Mammary epithelial cell (primary cell): ENCODE measurements at regions of chr14 and their contacts with region 1.

Region 1: DNA sequence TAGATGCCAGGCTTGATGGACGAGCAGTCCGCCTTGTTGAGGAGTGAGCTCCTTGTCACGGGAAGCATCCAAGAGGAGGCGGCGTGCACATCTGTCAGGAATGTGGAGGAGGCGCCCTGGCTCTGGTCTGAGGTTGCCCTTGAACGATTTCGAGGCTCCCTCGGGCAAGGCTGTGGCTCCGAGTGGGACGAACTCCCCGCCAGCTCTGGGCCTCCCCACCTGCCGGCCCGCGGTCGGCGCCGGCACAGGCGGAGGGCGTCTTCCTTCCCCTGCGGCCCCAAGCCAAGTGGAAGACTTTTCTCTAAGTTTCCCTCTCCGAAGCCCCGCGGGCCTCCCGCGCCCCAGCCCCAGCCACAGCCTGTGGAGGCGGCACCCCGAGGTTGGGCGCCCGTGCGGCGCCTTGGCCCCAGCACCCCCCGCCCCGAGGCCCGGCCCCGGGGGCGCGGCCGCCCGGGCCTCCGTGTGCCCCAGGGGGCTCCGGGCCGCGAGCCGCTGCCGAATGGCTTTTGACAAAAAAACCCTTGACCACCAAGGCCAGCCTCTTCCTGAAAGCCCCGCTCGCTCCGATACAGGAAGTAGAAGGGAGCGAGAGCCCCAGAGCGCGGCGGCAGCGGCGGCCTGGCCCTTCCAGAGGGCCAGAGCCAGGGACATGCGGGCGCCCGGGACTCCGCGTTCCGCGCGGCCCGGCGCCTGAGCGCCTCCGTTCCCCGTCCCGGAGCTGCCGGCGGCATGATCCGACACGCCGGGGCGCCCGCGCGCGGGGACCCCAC is at the start of gene RIN3:
- DNase-seq: peak; percentile 46
- H3K4me3 ChIP-seq: peak within 1 kb of the TSS; percentile 42 to 56 (median 44)
- H3K27ac ChIP-seq: peak within 1 kb of the TSS; percentile 18
- H3K4me1 ChIP-seq: peaks cover 18% of the 10 kb centered on the region
- H3K27me3 ChIP-seq: no peaks in the 10 kb centered on the region
- CTCF ChIP-seq: no peak
- total RNA-seq, gene RIN3: 3.5 to 14.5 TPM

Region 2: DNA sequence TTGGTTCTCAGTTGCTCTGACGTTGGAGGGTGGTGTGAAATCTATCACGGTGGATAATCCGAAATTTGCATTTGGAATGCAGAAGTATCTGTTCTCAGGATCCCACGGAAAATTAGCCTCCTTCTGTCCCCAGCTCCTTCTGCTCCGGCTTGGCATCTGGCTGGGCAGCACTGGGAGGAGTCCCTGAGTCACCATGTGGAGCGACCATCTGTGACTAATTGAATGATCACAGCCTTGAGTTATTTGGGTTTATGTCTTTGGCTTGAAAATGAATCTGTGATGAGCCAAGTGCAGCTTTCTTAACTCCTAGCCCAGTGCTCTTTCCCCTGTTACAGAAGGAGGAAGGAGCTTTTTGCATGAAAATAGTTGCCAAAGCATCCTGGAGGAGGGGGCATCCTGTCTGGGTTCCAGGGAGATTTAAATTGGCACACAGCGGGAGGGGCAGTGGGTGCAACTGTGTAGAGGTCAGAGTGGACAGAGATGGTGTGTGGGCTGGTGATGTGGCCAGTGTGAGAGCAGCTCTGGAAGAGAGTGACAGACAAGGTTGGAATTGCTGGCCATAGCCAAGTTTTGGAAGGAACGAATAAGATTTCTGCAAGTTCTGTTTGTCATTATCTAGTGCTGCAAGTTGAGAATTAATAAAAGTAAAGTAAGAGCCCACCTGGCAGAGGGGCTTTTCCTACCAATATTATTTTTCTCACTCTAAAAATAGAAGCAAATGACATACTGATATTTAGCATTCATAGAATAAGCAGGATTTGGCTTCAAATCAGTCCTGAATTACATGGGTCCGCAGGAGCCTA is 116.0 kb before region 1 on chr14:
- CTCF ChIA-PET with region 1: no interaction called
- dilution Hi-C with region 1: no loop called
- in situ Hi-C with region 1: no loop called
- intact Hi-C with region 1: loop called (anchors 10 kb)
- DNase-seq: peak; percentile 72
- H3K4me3 ChIP-seq: no peak overlapping the region
- H3K27ac ChIP-seq: no peak overlapping the region
- H3K4me1 ChIP-seq: peaks cover 17% of the 10 kb centered on the region
- H3K27me3 ChIP-seq: no peaks in the 10 kb centered on the region
- CTCF ChIP-seq: no peak

Region 3: DNA sequence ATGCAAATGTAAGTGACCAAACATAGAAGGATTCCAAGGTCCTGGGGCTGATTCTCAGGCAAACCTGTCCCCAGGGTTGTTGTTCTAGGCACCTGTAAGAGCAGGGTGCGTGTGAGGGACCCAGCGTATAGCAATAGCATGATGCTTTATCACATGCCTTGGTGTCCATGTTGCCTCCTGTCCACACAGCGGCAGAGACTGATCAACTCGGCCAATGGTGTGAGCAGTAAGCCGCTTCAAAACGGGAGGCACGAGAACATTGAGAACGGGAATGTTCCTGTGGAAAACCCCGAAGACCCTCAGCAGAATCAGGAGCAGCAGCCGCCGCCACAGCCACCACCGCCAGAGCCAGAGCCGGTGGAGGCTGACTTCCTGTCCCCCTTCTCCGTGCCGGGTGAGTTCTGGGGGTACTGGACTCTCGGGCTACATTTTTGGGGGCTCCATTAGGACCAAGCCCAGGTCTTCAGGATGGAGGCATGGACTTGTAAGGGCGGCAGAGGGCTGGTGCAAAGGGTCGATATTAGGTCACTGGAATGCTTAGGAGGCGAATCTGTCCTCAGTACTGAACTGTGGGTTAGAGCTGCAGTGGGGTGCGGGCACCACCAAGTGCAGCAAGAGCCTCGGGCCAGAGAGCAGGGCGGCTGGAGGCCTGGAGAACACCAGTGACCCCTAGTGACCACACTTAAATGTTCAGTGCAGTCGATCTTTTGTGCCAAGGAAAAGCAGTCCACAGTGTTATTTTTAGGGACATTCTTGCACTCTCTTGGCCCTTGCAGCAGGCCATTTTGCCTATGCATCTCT is 57.0 kb before region 1 on chr14:
- CTCF ChIA-PET with region 1: no interaction called
- dilution Hi-C with region 1: no loop called
- in situ Hi-C with region 1: no loop called
- intact Hi-C with region 1: loop called (anchors 5 kb)
- DNase-seq: peak; percentile 25
- H3K4me3 ChIP-seq: no peak overlapping the region
- H3K27ac ChIP-seq: no peak overlapping the region
- H3K4me1 ChIP-seq: no peaks in the 10 kb centered on the region
- H3K27me3 ChIP-seq: no peaks in the 10 kb centered on the region
- CTCF ChIP-seq: peak; percentile 38 to 49

Region 4: GRCh38 chr14:92471919-92472318 is 41.5 kb before region 1 on chr14:
- CTCF ChIA-PET with region 1: no interaction called
- dilution Hi-C with region 1: no loop called
- in situ Hi-C with region 1: no loop called
- intact Hi-C with region 1: loop called (anchors 1 kb)
- DNase-seq: peak; percentile 76
- H3K4me3 ChIP-seq: no peak overlapping the region
- H3K27ac ChIP-seq: no peak overlapping the region
- H3K4me1 ChIP-seq: peaks cover 25% of the 10 kb centered on the region
- H3K27me3 ChIP-seq: no peaks in the 10 kb centered on the region
- CTCF ChIP-seq: no peak

Region 5: DNA sequence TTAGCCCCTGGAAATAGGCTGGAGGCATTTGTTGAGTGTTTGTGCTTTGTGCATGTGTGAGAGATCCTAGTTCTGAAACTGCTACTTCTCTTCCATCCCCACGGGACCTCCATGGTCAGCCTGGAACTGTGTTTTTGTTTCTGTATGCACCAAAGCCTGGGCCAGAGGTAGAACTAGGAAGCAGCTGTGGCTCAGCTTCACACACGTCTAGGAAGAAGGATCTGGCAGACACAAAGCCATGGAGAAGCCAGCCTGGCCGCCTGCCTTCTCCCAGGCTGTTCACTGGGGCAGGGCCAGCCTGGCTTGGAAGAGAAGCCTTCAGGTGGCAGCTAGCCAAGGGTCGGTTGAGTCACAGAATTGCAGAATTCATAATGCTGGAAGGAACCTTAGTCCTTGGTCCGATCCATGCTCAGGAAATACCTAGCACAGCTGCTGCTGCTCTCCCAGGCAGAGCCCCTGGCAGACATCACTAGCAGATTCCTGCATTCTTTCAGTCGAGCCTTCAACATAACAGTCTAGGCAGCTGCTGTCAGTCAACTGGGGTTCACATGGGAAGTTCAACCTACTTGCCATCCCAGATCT is 27.2 kb after region 1 on chr14:
- CTCF ChIA-PET with region 1: no interaction called
- dilution Hi-C with region 1: no loop called
- in situ Hi-C with region 1: no loop called
- intact Hi-C with region 1: loop called (anchors 1 kb)
- DNase-seq: peak; percentile 94
- H3K4me3 ChIP-seq: no peak overlapping the region
- H3K27ac ChIP-seq: no peak overlapping the region
- H3K4me1 ChIP-seq: peaks cover 15% of the 10 kb centered on the region
- H3K27me3 ChIP-seq: no peaks in the 10 kb centered on the region
- CTCF ChIP-seq: no peak